A673 (cell line): ENCODE measurements at regions of chr1 and their contacts with region 1.

Region 1: GRCh38 chr1:10835423-10836421 is 39.3 kb upstream of the CASZ1 start:
- DNase-seq: peak; percentile 85
- H3K4me3 ChIP-seq: peak overlapping the region; percentile 24
- H3K27ac ChIP-seq: no peak overlapping the region
- H3K4me1 ChIP-seq: peaks cover 8% of the 10 kb centered on the region
- H3K27me3 ChIP-seq: no peaks in the 10 kb centered on the region
- CTCF ChIP-seq: peak; percentile 28

Region 2: GRCh38 chr1:10060311-10061100 is 775.2 kb before region 1 on chr1:
- CTCF ChIA-PET with region 1: no interaction called
- POLR2A ChIA-PET with region 1: interaction called, 11 read pairs
- intact Hi-C with region 1: no loop called
- DNase-seq: no peak
- H3K4me3 ChIP-seq: no peak overlapping the region
- H3K27ac ChIP-seq: no peak overlapping the region
- H3K4me1 ChIP-seq: peaks cover 22% of the 10 kb centered on the region
- H3K27me3 ChIP-seq: no peaks in the 10 kb centered on the region
- CTCF ChIP-seq: no peak